Natural killer cell (primary cell): ENCODE measurements at regions of chr20 and their contacts with region 1.

Region 1: GRCh38 chr20:4592316-4593148 is 129.2 kb upstream of the PRND start:
- DNase-seq: peak; percentile 51 to 70
- ATAC-seq: peak; percentile 77 to 88 (median 80)
- H3K4me3 ChIP-seq: peak overlapping the region; percentile 31
- H3K4me3 Mint-ChIP-seq: peak overlapping the region; percentile 82
- H3K27ac ChIP-seq: no peak overlapping the region
- H3K27ac Mint-ChIP-seq: no peak overlapping the region
- H3K4me1 ChIP-seq: peaks cover 12% of the 10 kb centered on the region
- H3K4me1 Mint-ChIP-seq: peaks cover 5 to 8% of the 10 kb centered on the region in 2 donors
- H3K27me3 ChIP-seq: peaks cover 2% of the 10 kb centered on the region
- H3K27me3 Mint-ChIP-seq: peaks cover 20 to 21% of the 10 kb centered on the region in 2 donors
- CTCF ChIP-seq: peak; percentile 99

Region 2: DNA sequence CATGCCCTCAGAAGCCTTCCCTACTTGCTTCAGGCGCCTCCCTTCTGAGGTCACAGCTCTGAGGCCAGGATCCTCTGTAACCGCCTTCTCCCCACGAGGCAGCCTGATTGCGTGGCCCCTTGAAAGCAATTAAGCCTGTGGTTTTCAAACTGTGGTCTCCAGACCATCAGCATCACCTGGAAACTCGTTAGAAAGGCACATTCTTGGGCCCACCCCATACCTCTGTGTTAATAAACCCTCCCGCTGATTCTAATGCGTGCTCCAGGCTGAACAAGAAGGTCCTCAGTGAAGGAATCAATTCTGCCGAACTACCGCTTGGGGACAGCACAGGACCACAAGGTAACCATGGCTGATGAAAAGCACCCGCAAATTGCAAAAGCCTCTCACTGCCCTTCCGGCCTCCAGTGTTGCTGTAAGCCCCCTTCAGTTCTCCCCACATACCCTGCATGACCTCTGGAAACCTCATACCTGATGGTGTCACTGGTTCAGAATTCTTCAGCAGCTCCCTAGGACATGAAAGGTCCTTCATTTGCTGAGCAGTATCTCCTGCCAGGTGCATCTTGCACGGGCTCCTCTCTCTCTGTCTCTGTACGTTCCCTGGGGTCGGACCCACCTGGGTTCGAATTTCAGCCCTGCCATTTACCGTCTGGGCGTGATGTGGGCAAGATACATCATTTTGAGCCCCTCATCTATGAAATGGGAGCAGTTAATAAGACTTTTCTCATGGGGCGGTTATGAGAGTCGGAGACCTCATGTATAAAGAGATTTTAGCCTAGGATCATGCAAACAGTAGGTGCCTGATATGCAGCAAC is 483.8 kb before region 1 on chr20:
- intact Hi-C with region 1: loop called (anchors 1 kb)
- DNase-seq: peak; percentile 31 to 83
- ATAC-seq: peak; percentile 71 to 90 (median 80)
- H3K4me3 ChIP-seq: no peak overlapping the region
- H3K4me3 Mint-ChIP-seq: no peak overlapping the region
- H3K27ac ChIP-seq: no peak overlapping the region
- H3K27ac Mint-ChIP-seq: no peak overlapping the region
- H3K4me1 ChIP-seq: peaks cover 4% of the 10 kb centered on the region
- H3K4me1 Mint-ChIP-seq: peaks cover 5 to 7% of the 10 kb centered on the region in 2 donors
- H3K27me3 ChIP-seq: peaks cover 2% of the 10 kb centered on the region
- H3K27me3 Mint-ChIP-seq: peaks cover 7 to 11% of the 10 kb centered on the region in 2 donors
- CTCF ChIP-seq: peak; percentile 72

Region 3: DNA sequence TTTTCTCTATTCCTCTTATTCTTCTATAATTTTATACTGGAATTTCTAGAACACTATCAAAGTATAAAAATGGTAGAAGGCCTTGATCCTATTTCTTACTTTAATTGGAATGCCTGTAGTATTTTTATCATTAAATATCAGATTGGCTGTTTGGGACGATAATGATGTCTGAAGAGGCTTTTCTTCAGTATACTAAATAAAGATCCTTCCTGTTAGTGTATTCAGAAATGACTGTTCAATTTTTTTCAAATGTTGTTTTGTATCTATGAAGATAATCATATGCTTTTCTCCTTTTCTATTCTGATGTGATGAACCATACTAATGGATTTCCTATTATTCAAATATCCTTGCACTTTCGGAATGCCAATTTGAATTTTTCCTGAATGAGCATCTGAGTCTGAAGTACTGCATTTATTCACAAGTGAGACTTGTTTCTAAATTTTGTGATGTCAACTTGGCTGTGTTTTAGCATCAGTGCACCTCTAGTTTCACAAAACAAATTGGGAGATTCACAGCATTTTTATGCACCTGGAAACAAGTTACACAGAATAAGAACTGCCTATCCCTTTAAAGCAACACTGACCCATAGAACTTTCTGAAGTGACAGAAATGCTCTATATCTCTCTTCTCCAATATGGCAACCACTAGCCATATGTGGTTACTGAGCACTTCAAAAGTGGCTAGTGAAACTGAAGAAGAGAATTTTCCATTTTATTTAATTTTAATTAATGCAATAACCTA is 57.6 kb after region 1 on chr20:
- intact Hi-C with region 1: no loop called
- DNase-seq: no peak
- ATAC-seq: no peak
- H3K4me3 ChIP-seq: no peak overlapping the region
- H3K4me3 Mint-ChIP-seq: no peak overlapping the region
- H3K27ac ChIP-seq: no peak overlapping the region
- H3K27ac Mint-ChIP-seq: no peak overlapping the region
- H3K4me1 ChIP-seq: no peaks in the 10 kb centered on the region
- H3K4me1 Mint-ChIP-seq: no peaks in the 10 kb centered on the region
- H3K27me3 ChIP-seq: no peaks in the 10 kb centered on the region
- H3K27me3 Mint-ChIP-seq: peaks cover 2 to 14% of the 10 kb centered on the region in 2 donors
- CTCF ChIP-seq: no peak

Region 4: GRCh38 chr20:4813863-4814695 is 221.5 kb after region 1 on chr20:
- intact Hi-C with region 1: no loop called
- DNase-seq: peak; percentile 70 to 94
- ATAC-seq: peak; percentile 62 to 79 (median 70)
- H3K4me3 ChIP-seq: peak overlapping the region; percentile 40
- H3K4me3 Mint-ChIP-seq: peak overlapping the region; percentile 95
- H3K27ac ChIP-seq: peak overlapping the region; percentile 99
- H3K27ac Mint-ChIP-seq: peak overlapping the region; percentile 99 to 100
- H3K4me1 ChIP-seq: peaks cover 73% of the 10 kb centered on the region
- H3K4me1 Mint-ChIP-seq: peaks cover 48 to 57% of the 10 kb centered on the region in 2 donors
- H3K27me3 ChIP-seq: no peaks in the 10 kb centered on the region
- H3K27me3 Mint-ChIP-seq: no peaks in the 10 kb centered on the region
- CTCF ChIP-seq: no peak